ENCODE measurements at regions of chr21 and their contacts with region 1.

Region 1: GRCh38 chr21:40143822-40144525 is 276.7 kb downstream of the PCP4 start:
- DNase-seq: peak in 1 of 2 donors; percentile 23
- ATAC-seq: no peak
- H3K4me3 ChIP-seq: no peak overlapping the region
- H3K27ac ChIP-seq: no peak overlapping the region
- H3K4me1 ChIP-seq: no peaks in the 10 kb centered on the region
- H3K27me3 ChIP-seq: no peaks in the 10 kb centered on the region
- CTCF ChIP-seq: peak; percentile 54

Region 2: GRCh38 chr21:40186045-40186444 is 42.1 kb after region 1 on chr21:
- intact Hi-C with region 1: no loop called
- DNase-seq: no peak
- ATAC-seq: no peak
- H3K4me3 ChIP-seq: no peak overlapping the region
- H3K27ac ChIP-seq: no peak overlapping the region
- H3K4me1 ChIP-seq: no peaks in the 10 kb centered on the region
- H3K27me3 ChIP-seq: no peaks in the 10 kb centered on the region
- CTCF ChIP-seq: no peak

Region 3: DNA sequence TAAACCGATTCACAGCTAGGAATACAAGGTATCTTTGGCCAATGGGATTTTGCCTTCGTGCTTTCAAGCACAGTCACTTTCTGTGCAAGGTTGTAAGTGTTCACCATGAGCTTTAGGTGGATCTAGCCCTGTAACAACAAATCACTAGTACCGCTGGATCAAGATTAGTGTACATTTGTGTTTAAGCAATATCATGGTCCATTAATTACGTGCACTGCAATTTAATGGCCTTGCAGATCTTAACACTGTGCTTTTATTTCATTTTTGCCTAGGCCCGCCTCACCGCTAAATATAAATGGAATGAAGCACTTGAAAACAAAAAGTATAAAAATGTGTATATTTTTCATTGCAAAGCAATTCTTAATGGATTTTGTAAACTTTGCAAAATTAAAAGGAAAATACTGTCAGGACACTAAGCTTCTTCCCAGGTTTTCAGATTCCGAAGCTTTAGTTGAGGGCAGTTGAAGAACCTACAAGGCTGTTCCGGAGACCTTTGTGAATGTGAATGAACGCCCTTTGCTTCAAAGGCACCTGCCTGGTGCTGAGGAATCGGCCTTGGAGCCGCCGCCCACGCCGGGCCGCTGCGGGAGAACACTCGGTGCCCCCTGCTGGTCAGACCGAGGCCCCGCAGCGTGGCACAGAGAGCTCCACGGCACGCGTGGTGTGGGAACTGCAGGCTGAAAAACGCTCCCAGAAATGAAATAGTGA is 242.1 kb after region 1 on chr21:
- intact Hi-C with region 1: loop called in 1 of 2 experiments (anchors 10 kb)
- DNase-seq: peak; percentile 48 to 57
- ATAC-seq: no peak
- H3K4me3 ChIP-seq: no peak overlapping the region
- H3K27ac ChIP-seq: no peak overlapping the region
- H3K4me1 ChIP-seq: no peaks in the 10 kb centered on the region
- H3K27me3 ChIP-seq: no peaks in the 10 kb centered on the region
- CTCF ChIP-seq: peak; percentile 34

Region 4: GRCh38 chr21:41068967-41069642 is 925.1 kb after region 1 on chr21:
- intact Hi-C with region 1: loop called (anchors 5 kb)
- DNase-seq: peak; percentile 79 to 83
- ATAC-seq: peak in 2 of 4 donors; percentile 29 to 78
- H3K4me3 ChIP-seq: peak overlapping the region; percentile 36
- H3K27ac ChIP-seq: no peak overlapping the region
- H3K4me1 ChIP-seq: no peaks in the 10 kb centered on the region
- H3K27me3 ChIP-seq: peaks cover 0 to 24% (median 0%) of the 10 kb centered on the region in 3 donors
- CTCF ChIP-seq: peak; percentile 65